ENCODE measurements at regions of chr21 and their contacts with region 1.

Region 1: GRCh38 chr21:40120940-40121575 is 253.8 kb downstream of the PCP4 start:
- DNase-seq: no peak
- H3K4me3 ChIP-seq: no peak overlapping the region
- H3K27ac ChIP-seq: no peak overlapping the region
- H3K4me1 ChIP-seq: no peaks in the 10 kb centered on the region
- H3K27me3 ChIP-seq: 0 out of 2 replicates have a peak, but pooled peaks cover 3% of the 10 kb centered on the region
- CTCF ChIP-seq: peak; percentile 75

Region 2: DNA sequence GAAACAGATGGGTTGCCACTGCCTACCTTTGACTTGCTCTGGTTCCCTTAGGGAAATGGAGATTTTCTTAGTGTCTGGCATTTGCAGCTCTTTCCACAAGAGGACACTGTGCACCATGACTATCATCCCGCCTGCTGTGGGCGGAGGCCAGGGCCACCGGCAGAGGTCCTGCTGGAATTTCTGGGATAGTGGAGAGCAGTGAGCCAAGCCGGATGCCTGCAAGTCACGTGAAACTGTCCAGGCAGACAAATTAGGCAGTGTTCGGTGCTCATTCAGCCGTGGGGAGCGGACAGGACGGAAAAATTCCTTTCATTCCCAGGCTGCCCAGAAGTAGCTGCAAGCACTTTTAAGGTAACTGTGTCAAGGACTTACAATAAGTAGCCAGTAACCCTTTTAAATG is 332.7 kb before region 1 on chr21:
- CTCF ChIA-PET with region 1: interaction called, 5 read pairs
- POLR2A ChIA-PET with region 1: no interaction called
- intact Hi-C with region 1: loop called (anchors 1 kb)
- DNase-seq: peak; percentile 49 to 54
- H3K4me3 ChIP-seq: no peak overlapping the region
- H3K27ac ChIP-seq: no peak overlapping the region
- H3K4me1 ChIP-seq: no peaks in the 10 kb centered on the region
- H3K27me3 ChIP-seq: no peaks in the 10 kb centered on the region; the same call in 1 of the 2 replicates
- CTCF ChIP-seq: peak; percentile 66

Region 3: GRCh38 chr21:39834543-39834942 is 286.5 kb before region 1 on chr21:
- CTCF ChIA-PET with region 1: no interaction called
- POLR2A ChIA-PET with region 1: no interaction called
- intact Hi-C with region 1: no loop called
- DNase-seq: no peak
- H3K4me3 ChIP-seq: no peak overlapping the region
- H3K27ac ChIP-seq: no peak overlapping the region
- H3K4me1 ChIP-seq: no peaks in the 10 kb centered on the region
- H3K27me3 ChIP-seq: peaks cover 4% of the 10 kb centered on the region; the same call in 1 of the 2 replicates
- CTCF ChIP-seq: no peak

Region 4: GRCh38 chr21:39867198-39867650 is 253.8 kb before region 1 on chr21 and contains the start of gene PCP4:
- CTCF ChIA-PET with region 1: no interaction called
- POLR2A ChIA-PET with region 1: no interaction called
- intact Hi-C with region 1: loop called (anchors 1 kb)
- DNase-seq: peak; percentile 28 to 46
- H3K4me3 ChIP-seq: no peak within 1 kb of the TSS
- H3K27ac ChIP-seq: no peak within 1 kb of the TSS
- H3K4me1 ChIP-seq: no peaks in the 10 kb centered on the region
- H3K27me3 ChIP-seq: peaks cover 35% of the 10 kb centered on the region
- CTCF ChIP-seq: peak; percentile 85
- total RNA-seq, gene PCP4: not detected in 2 replicates

Region 5: GRCh38 chr21:39947031-39947430 is 174.0 kb before region 1 on chr21:
- CTCF ChIA-PET with region 1: no interaction called
- POLR2A ChIA-PET with region 1: no interaction called
- intact Hi-C with region 1: no loop called
- DNase-seq: no peak
- H3K4me3 ChIP-seq: no peak overlapping the region
- H3K27ac ChIP-seq: no peak overlapping the region
- H3K4me1 ChIP-seq: no peaks in the 10 kb centered on the region
- H3K27me3 ChIP-seq: peaks cover 16% of the 10 kb centered on the region
- CTCF ChIP-seq: no peak

Measured in PC-9 (cell line).